Calu3 (cell line): ENCODE measurements at regions of chr11 and their contacts with region 1.

Region 1: GRCh38 chr11:17063171-17064002 is 14.1 kb downstream of the RPS13 start:
- DNase-seq: peak; percentile 83
- H3K4me3 Mint-ChIP-seq: no peak overlapping the region
- H3K27ac Mint-ChIP-seq: peak overlapping the region; percentile 55
- H3K4me1 Mint-ChIP-seq: peaks cover 8% of the 10 kb centered on the region
- H3K27me3 Mint-ChIP-seq: no peaks in the 10 kb centered on the region
- CTCF ChIP-seq: peak; percentile 81

Region 2: GRCh38 chr11:16785520-16786128 is 277.8 kb before region 1 on chr11:
- CTCF ChIA-PET with region 1: no interaction called
- intact Hi-C with region 1: loop called (anchors 5 kb)
- DNase-seq: peak; percentile 72
- H3K4me3 Mint-ChIP-seq: no peak overlapping the region
- H3K27ac Mint-ChIP-seq: peak overlapping the region; percentile 42
- H3K4me1 Mint-ChIP-seq: peaks cover 84% of the 10 kb centered on the region
- H3K27me3 Mint-ChIP-seq: no peaks in the 10 kb centered on the region
- CTCF ChIP-seq: peak; percentile 86

Region 3: DNA sequence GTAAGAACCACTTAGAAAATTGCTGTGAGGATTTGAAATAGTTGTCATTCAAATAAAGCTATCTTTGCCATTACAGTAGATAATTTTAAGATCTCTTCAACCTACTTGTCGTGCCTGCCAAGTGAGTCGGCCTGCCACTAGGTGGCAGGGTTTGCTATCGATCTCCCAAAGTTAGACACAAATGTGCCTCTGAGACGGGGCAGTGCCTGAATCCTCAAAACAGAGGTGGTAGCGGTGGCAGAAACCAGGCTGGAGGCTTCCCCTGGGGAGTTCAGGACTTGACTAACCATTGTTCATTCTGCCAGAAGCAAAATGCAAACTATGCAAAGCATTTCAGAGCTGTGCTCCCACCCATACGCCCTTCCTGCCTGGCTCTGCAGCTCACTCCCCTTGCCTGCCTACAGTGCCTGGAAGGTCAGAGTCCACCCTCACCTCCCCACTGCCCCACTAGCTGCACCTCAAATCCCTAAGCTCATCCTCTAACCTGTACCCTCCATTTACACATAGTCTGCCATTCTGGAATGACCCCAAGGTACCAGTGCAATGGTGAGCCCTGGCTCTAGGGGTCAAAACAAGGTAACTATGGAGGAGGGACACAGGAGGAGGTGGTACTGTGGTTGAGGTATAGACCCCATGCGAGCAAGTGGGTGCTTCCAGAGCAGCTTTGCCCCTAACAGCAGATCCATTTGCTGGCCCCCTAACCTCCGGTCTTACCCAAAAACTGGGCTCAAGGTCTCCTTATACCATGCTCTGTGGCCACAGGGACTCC is 242.9 kb before region 1 on chr11:
- CTCF ChIA-PET with region 1: interaction called, 6 read pairs
- intact Hi-C with region 1: loop called (anchors 10 kb)
- DNase-seq: peak; percentile 71
- H3K4me3 Mint-ChIP-seq: peak overlapping the region; percentile 26
- H3K27ac Mint-ChIP-seq: peak overlapping the region; percentile 37
- H3K4me1 Mint-ChIP-seq: peaks cover 62% of the 10 kb centered on the region
- H3K27me3 Mint-ChIP-seq: no peaks in the 10 kb centered on the region
- CTCF ChIP-seq: peak; percentile 82

Region 4: DNA sequence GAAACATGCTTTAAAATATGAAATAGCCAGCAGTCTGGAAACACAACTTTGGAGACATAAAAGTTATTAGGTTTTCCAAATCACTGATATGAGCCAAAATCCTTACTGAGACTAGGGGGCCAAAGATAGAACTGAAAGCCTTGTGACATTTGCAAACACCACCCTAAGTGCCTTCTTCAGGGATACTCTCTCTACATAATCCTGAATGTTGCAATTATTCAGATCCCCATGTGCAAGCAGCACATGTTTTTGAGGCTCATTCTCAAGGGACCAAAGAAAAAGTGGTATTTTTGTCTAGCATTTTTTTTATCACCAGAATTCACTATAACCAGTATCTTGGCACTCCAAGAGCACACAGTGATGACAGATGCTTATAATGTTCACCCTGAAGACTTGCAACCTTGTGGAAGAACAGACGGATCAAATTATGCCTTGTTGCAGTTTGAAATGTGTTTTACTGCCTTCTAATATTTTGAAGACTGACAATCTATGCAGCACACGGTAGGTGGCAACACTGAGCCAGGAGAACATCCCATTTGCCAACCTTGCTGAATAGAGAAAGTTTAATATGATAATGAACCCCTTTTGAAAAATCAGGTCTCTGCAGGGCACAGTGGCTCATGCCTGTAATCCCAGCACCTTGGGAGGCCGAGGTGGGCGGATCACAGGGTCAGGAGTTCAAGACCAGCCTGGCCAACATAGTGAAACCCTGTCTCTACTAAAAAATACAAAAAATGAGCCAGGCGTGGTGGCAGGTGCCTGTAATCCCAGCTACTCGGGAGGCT is 127.7 kb before region 1 on chr11:
- CTCF ChIA-PET with region 1: interaction called, 6 read pairs
- intact Hi-C with region 1: loop called (anchors 1 kb)
- DNase-seq: peak; percentile 45
- H3K4me3 Mint-ChIP-seq: no peak overlapping the region
- H3K27ac Mint-ChIP-seq: no peak overlapping the region
- H3K4me1 Mint-ChIP-seq: peaks cover 39% of the 10 kb centered on the region
- H3K27me3 Mint-ChIP-seq: no peaks in the 10 kb centered on the region
- CTCF ChIP-seq: peak; percentile 81

Region 5: DNA sequence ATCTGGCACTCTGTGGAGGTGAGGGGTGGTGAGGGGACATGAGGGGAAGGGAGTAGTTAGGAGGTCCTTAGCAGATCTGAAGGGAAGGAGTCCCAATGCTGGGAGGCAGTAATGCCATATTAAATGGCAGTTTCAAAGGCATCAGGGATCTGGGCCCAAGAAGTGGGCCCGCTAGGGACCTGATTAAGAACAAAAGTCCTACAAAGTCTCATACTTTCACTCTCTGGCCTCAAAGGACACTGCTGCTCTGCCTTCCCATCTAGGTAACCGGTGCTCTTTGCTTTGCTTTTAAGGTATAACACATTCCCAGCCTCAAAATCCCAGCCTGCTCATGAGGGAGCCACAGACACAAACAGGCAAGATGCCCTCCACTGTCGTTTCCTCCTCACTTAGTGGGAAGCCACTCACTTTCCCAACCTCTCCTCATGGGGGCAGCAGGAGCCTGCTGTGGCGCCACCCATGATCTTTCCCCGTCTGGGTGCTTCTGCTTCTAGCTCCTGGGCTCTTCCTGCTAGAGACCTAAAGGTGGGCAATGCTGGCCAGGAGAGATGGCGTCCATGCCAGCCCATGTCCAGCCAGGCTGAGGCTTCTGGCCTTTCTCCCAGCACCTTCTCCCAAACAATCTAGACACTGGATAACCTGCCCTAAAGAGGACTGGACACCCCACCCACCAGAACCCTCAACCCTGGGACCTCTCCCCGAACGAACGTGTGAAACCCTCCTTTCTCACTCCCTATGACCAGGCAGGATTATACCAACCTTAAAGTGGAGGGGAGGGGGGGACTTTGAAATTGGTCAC is 117.5 kb before region 1 on chr11:
- CTCF ChIA-PET with region 1: interaction called, 25 read pairs
- intact Hi-C with region 1: loop called (anchors 1 kb)
- DNase-seq: peak; percentile 82
- H3K4me3 Mint-ChIP-seq: no peak overlapping the region
- H3K27ac Mint-ChIP-seq: peak overlapping the region; percentile 25
- H3K4me1 Mint-ChIP-seq: peaks cover 37% of the 10 kb centered on the region
- H3K27me3 Mint-ChIP-seq: no peaks in the 10 kb centered on the region
- CTCF ChIP-seq: peak; percentile 87

Region 6: GRCh38 chr11:17014838-17015626 is 48.4 kb before region 1 on chr11:
- CTCF ChIA-PET with region 1: interaction called, 10 read pairs
- intact Hi-C with region 1: loop called (anchors 5 kb)
- DNase-seq: peak; percentile 75
- H3K4me3 Mint-ChIP-seq: peak overlapping the region; percentile 94
- H3K27ac Mint-ChIP-seq: peak overlapping the region; percentile 89
- H3K4me1 Mint-ChIP-seq: peaks cover 27% of the 10 kb centered on the region
- H3K27me3 Mint-ChIP-seq: no peaks in the 10 kb centered on the region
- CTCF ChIP-seq: peak; percentile 53

Region 7: GRCh38 chr11:17036666-17037542 is 26.5 kb before region 1 on chr11:
- CTCF ChIA-PET with region 1: interaction called, 11 read pairs
- intact Hi-C with region 1: loop called (anchors 2 kb)
- DNase-seq: peak; percentile 51
- H3K4me3 Mint-ChIP-seq: no peak overlapping the region
- H3K27ac Mint-ChIP-seq: no peak overlapping the region
- H3K4me1 Mint-ChIP-seq: peaks cover 5% of the 10 kb centered on the region
- H3K27me3 Mint-ChIP-seq: no peaks in the 10 kb centered on the region
- CTCF ChIP-seq: peak; percentile 36